Aorta (tissue), 5 donors: ENCODE measurements at regions of chr16 and their contacts with region 1.

Region 1: GRCh38 chr16:47636501-47637099 is 175.5 kb downstream of the PHKB start:
- DNase-seq: no peak
- ATAC-seq: no peak
- H3K4me3 ChIP-seq: no peak overlapping the region
- H3K27ac ChIP-seq: no peak overlapping the region
- H3K4me1 ChIP-seq: peaks cover 0 to 3% of the 10 kb centered on the region in 2 donors
- H3K27me3 ChIP-seq: no peaks in the 10 kb centered on the region

Region 2: DNA sequence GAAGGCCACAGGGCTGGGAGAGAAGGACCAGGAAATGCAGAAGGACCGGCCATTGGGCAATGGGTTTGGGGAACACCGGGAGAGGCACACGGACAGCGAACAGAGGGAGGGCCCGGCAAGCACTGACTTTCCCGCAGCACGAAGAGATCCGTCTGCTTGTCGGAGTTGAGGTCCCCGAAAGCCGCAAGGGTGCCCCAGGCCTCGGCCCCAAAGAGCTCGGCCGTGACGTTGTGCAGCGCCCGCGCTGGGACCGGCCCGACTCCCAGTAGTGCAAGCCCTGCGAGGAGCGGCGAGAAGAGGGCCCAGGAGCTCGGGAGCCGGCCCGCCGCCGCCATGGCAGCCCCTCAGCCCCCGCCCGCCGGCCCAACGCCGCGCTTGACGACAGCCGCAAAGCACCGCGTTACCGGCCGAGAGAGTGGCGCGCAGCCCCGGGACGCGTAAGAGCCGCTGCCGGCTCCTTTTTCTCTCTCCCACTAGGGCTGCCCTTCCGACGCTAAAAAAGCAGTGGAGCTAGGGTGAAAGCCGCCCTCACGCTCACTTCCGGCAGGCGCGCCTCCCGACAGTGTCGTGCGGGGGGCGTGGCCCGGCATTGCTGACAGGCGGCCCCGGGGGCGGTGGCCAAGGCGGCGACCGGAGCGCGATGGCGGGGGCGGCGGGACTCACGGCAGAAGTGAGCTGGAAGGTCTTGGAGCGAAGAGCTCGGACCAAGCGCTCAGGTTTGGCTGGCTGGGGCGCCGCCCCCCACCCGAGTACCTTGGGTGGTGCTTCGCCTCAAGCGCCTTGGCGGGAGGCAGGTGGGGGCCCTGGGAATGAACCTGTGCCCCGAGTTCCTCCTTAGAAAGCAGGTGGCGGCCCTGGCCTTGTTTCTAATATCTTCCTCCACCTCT is 175.6 kb before region 1 on chr16 and contains the starts of genes ITFG1 and PHKB:
- intact Hi-C with region 1: loop called in 1 of 2 experiments (anchors 10 kb)
- DNase-seq: peak; percentile 94 to 98
- ATAC-seq: peak; percentile 98
- H3K4me3 ChIP-seq: peak within 1 kb of the TSS; percentile 54 to 94
- H3K27ac ChIP-seq: peak within 1 kb of the TSS; percentile 81 to 85
- H3K4me1 ChIP-seq: peaks cover 0 to 4% of the 10 kb centered on the region in 2 donors
- H3K27me3 ChIP-seq: no peaks in the 10 kb centered on the region
- total RNA-seq, gene ITFG1: 50.4 to 61.9 TPM
- total RNA-seq, gene PHKB: 58.6 to 86.5 TPM

Region 3: DNA sequence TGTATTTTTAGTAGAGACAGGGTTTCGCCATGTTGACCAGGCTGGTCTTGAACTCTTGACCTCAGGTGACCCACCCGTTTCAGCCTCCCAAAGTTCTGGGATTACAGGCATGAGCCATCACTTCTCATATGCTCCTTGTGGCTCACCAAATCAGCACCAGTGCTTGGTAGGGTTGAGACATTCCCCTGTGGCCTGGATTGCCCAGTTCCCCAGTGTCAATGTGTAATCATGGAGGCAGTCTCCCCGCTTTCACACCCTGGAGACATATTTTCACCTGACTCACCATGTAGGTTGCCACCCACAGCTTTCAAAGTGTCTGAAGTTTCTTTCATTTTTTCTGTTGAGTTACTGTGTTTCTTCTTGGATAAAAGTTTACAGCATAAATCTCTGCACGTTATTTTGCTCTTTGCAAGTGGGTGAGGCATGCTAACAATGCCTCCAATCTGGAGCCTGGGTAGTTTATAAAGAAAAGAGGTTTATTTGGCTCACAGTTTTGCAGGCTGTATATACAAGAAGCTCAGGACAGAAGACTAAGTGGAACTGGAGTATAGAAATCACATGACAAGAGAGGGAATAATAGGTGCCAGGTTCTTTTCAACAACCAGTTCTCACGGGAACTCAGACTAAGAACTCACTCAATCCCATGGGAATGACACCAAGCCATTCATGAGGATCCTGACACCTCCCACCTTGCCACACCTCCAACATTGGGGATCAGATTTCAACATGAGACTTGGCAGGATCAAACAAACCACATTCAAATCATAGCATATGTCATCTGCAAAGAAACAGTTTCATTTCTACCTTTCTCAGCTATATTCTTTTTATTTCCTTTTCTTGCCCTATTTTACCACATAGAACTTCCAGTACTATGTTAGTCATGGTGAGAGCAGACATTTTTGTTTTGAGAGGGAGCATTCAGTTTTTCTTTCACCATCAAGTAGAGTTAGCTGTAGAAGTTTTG is 62.2 kb before region 1 on chr16:
- intact Hi-C with region 1: no loop called
- DNase-seq: no peak
- ATAC-seq: no peak
- H3K4me3 ChIP-seq: no peak overlapping the region
- H3K27ac ChIP-seq: no peak overlapping the region
- H3K4me1 ChIP-seq: no peaks in the 10 kb centered on the region
- H3K27me3 ChIP-seq: no peaks in the 10 kb centered on the region

Region 4: GRCh38 chr16:47694543-47694942 is 57.9 kb after region 1 on chr16:
- intact Hi-C with region 1: no loop called
- DNase-seq: no peak
- ATAC-seq: no peak
- H3K4me3 ChIP-seq: no peak overlapping the region
- H3K27ac ChIP-seq: no peak overlapping the region
- H3K4me1 ChIP-seq: no peaks in the 10 kb centered on the region
- H3K27me3 ChIP-seq: no peaks in the 10 kb centered on the region